Sciatic nerve (tissue), 2 donors: ENCODE measurements at regions of chr15 and their contacts with region 1.

Region 1: GRCh38 chr15:85837011-85837433 is 42.3 kb upstream of the KLHL25 start:
- DNase-seq: no peak
- ATAC-seq: no peak

Region 2: GRCh38 chr15:85730001-85730820 is 106.8 kb before region 1 on chr15:
- intact Hi-C with region 1: loop called (anchors 5 kb)
- DNase-seq: no peak
- ATAC-seq: peak; percentile 57